Spleen (tissue), 13 donors: ENCODE measurements at regions of chr4 and their contacts with region 1.

Region 1: DNA sequence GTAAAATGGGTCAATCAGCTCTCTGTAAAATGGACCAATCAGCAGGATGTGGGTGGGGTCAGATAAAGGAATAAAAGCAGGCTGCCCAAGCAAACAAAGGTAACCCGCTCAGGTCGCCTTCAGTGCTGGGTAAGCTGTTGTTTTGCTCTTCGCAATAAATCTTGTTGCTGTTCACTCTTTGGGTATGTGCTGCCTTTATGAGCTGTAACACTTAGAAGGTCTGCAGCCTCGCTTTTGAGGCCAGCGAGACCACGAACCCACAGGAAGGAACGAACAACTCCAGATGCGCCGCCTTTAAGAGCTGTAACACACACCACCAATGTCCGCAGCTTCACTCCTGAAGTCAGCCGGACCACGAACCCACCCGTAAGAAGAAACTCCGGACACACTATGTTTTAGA is 11.5 kb upstream of the CAMK2D start:
- DNase-seq: no peak
- H3K4me3 ChIP-seq: no peak overlapping the region
- H3K27ac ChIP-seq: no peak overlapping the region
- H3K4me1 ChIP-seq: peaks cover 0 to 8% (median 0%) of the 10 kb centered on the region in 6 donors
- H3K27me3 ChIP-seq: no peaks in the 10 kb centered on the region
- CTCF ChIP-seq: no peak
- POLR2A ChIP-seq: no peak

Region 2: GRCh38 chr4:113499696-113500095 is 273.3 kb before region 1 on chr4:
- intact Hi-C with region 1: no loop called
- DNase-seq: no peak
- H3K4me3 ChIP-seq: no peak overlapping the region
- H3K27ac ChIP-seq: no peak overlapping the region
- H3K4me1 ChIP-seq: no peaks in the 10 kb centered on the region
- H3K27me3 ChIP-seq: no peaks in the 10 kb centered on the region
- CTCF ChIP-seq: no peak
- POLR2A ChIP-seq: no peak

Region 3: DNA sequence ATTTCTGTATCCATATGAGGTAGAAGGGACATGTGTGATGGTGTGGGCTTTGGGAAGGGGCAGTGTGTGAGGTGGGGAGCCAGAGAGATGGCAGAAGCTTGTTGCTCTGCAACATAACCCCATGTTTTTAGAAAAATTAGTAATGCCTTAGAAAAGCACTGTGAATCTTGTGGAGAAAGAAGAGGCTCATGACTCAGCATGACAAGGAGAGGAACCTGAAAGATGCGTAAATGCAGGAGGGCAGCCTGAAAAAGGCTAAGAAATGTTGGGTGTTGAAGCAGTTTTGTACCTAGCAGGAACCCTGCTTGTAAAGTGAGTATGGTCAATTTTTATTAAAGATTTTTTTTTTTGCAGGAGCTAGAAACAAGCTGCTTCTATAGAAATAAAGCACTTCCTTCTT is 146.6 kb after region 1 on chr4:
- intact Hi-C with region 1: loop called (anchors 10 kb)
- DNase-seq: no peak
- H3K4me3 ChIP-seq: no peak overlapping the region
- H3K27ac ChIP-seq: no peak overlapping the region
- H3K4me1 ChIP-seq: no peaks in the 10 kb centered on the region
- H3K27me3 ChIP-seq: no peaks in the 10 kb centered on the region
- CTCF ChIP-seq: no peak
- POLR2A ChIP-seq: no peak

Region 4: DNA sequence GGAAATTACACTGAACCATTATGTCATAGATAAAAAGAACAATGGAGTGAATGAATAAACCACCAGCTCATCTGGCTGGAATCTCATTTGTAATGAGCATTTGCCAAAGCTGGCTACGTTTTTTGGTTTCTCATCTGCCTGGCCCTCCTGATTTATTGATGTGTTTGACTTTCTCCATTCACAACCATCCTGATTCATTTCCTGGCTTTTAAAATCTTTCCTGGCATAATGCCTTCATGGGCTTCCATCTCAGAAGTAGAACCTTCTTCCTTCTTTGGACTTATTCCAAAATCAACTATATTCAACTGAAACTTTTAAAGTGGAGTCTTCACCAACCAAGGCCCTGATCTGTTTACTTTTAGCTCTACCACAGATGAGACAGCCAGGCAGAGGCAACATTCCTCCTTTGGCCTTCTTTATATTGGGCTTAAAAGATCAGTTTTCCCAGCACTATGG is 242.5 kb after region 1 on chr4:
- intact Hi-C with region 1: no loop called
- DNase-seq: no peak
- H3K4me3 ChIP-seq: no peak overlapping the region
- H3K27ac ChIP-seq: no peak overlapping the region
- H3K4me1 ChIP-seq: no peaks in the 10 kb centered on the region
- H3K27me3 ChIP-seq: peaks cover 0 to 17% (median 0%) of the 10 kb centered on the region in 7 donors
- CTCF ChIP-seq: no peak
- POLR2A ChIP-seq: no peak